ENCODE measurements at regions of chr22 and their contacts with region 1.

Region 1: DNA sequence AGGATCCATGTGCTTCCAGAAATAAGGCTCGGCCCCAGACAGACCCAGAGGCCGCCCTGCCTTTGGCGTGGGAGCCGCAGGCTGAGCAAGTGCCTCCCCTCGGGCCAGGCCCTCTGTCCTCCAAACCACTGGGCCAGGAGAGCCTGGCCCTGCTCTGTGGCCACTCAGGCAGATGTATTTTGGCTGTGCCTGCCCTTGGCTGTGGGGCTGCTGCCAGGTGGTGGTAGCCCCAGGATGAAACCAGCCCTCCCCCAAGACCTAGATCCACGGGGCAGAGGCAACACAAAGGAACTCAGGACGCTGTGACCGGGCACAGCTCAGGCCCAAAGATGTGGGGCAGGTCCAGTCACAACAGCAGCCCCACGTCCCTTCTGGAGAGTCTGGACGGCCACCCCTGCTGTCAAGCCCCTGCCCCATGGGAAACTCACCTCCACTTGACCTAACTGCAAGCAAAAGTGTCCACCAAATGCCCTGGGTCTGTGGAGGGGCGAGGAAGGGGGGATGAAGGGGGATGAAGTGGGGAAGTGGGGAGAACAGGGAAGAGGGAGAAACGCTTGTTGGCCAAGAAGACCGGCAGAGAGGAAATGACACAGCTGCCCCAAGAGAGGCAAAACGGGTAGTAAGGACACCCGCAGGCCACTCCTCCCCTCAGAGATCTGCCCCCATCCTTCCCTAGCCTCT is 23.9 kb downstream of the PISD start:
- DNase-seq: peak in 1 of 2 donors; percentile 56
- ATAC-seq: peak; percentile 56 to 81 (median 69)
- H3K4me3 ChIP-seq: peak overlapping the region in 9 of 10 donors; percentile 8 to 62 (median 28)
- H3K27ac ChIP-seq: peak overlapping the region in 9 of 10 donors; percentile 62 to 97 (median 74)
- H3K4me1 ChIP-seq: peaks cover 6 to 69% (median 22%) of the 10 kb centered on the region in 9 donors
- H3K27me3 ChIP-seq: no peaks in the 10 kb centered on the region
- CTCF ChIP-seq: no peak

Region 2: GRCh38 chr22:30830907-30831306 is 807.2 kb before region 1 on chr22:
- intact Hi-C with region 1: no loop called
- DNase-seq: peak in 1 of 2 donors; percentile 26
- ATAC-seq: peak; percentile 36 to 83 (median 72)
- H3K4me3 ChIP-seq: no peak overlapping the region
- H3K27ac ChIP-seq: peak overlapping the region in 1 of 10 donors; percentile 11
- H3K4me1 ChIP-seq: peaks cover 0 to 21% (median 7%) of the 10 kb centered on the region in 9 donors
- H3K27me3 ChIP-seq: no peaks in the 10 kb centered on the region
- CTCF ChIP-seq: no peak

Region 3: GRCh38 chr22:31537019-31537535 is 101.0 kb before region 1 on chr22:
- intact Hi-C with region 1: no loop called
- DNase-seq: no peak
- ATAC-seq: no peak
- H3K4me3 ChIP-seq: no peak overlapping the region
- H3K27ac ChIP-seq: peak overlapping the region in 1 of 10 donors; percentile 8
- H3K4me1 ChIP-seq: no peaks in the 10 kb centered on the region
- H3K27me3 ChIP-seq: no peaks in the 10 kb centered on the region
- CTCF ChIP-seq: no peak

Region 4: GRCh38 chr22:31561238-31561887 is 76.7 kb before region 1 on chr22:
- intact Hi-C with region 1: loop called in 9 of 10 experiments (anchors 1 to 5 kb)
- DNase-seq: peak; percentile 62 to 74
- ATAC-seq: peak; percentile 79 to 96 (median 90)
- H3K4me3 ChIP-seq: no peak overlapping the region
- H3K27ac ChIP-seq: no peak overlapping the region
- H3K4me1 ChIP-seq: peaks cover 0 to 6% (median 0%) of the 10 kb centered on the region in 9 donors
- H3K27me3 ChIP-seq: no peaks in the 10 kb centered on the region
- CTCF ChIP-seq: peak; percentile 46 to 81 (median 73)

Region 5: DNA sequence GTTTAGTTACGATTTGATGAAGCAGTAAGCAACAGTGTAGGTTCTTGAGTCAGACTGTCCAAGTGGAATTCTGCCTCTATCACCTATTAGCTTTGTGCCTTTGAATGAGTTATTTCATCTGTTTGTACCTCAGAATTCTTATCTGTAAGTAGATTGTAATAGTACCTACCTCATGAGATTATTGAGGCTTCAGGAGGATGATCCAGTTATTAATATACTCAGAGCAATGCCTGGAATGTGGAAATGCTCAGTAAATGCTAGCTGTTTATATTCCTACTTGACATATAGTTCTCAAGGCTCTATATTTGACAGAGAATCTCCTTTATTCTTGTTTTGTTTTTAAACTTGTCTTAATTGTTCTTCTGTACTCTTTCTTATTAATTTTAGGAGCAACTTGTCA is 71.6 kb before region 1 on chr22:
- intact Hi-C with region 1: loop called in 6 of 10 experiments (anchors 2 to 5 kb)
- DNase-seq: no peak
- ATAC-seq: no peak
- H3K4me3 ChIP-seq: no peak overlapping the region
- H3K27ac ChIP-seq: no peak overlapping the region
- H3K4me1 ChIP-seq: peaks cover 0 to 2% (median 0%) of the 10 kb centered on the region in 9 donors
- H3K27me3 ChIP-seq: no peaks in the 10 kb centered on the region
- CTCF ChIP-seq: no peak

Region 6: GRCh38 chr22:31681349-31682345 is 43.6 kb after region 1 on chr22:
- intact Hi-C with region 1: no loop called
- DNase-seq: no peak
- ATAC-seq: no peak
- H3K4me3 ChIP-seq: no peak overlapping the region
- H3K27ac ChIP-seq: peak overlapping the region in 2 of 10 donors; percentile 25 to 60
- H3K4me1 ChIP-seq: peaks cover 0 to 25% (median 5%) of the 10 kb centered on the region in 9 donors
- H3K27me3 ChIP-seq: no peaks in the 10 kb centered on the region
- CTCF ChIP-seq: no peak

Region 7: DNA sequence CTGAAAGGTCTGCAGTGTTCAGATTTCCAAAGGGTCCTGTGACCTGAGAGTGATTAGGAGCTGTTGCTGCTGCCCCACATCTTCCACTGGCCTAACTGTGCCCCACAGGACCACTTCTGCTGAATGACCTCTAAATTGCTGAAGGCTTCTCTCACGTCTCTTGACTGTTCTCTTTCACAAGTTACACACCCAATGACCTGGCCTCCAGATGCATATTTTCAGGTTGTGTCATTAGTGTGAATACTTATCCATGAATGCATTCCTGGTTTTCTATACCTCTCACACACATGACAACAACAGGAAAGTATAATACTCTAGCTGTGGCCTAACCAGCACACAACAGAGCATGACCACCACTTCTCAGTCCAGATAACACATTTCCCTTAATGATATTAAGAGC is 96.4 kb after region 1 on chr22:
- intact Hi-C with region 1: no loop called
- DNase-seq: no peak
- ATAC-seq: no peak
- H3K4me3 ChIP-seq: no peak overlapping the region
- H3K27ac ChIP-seq: no peak overlapping the region
- H3K4me1 ChIP-seq: peaks cover 0 to 18% (median 14%) of the 10 kb centered on the region in 9 donors
- H3K27me3 ChIP-seq: no peaks in the 10 kb centered on the region
- CTCF ChIP-seq: no peak

Measured in heart right ventricle (tissue), 16 donors.